ENCODE measurements at regions of chr16 and their contacts with region 1.

Region 1: DNA sequence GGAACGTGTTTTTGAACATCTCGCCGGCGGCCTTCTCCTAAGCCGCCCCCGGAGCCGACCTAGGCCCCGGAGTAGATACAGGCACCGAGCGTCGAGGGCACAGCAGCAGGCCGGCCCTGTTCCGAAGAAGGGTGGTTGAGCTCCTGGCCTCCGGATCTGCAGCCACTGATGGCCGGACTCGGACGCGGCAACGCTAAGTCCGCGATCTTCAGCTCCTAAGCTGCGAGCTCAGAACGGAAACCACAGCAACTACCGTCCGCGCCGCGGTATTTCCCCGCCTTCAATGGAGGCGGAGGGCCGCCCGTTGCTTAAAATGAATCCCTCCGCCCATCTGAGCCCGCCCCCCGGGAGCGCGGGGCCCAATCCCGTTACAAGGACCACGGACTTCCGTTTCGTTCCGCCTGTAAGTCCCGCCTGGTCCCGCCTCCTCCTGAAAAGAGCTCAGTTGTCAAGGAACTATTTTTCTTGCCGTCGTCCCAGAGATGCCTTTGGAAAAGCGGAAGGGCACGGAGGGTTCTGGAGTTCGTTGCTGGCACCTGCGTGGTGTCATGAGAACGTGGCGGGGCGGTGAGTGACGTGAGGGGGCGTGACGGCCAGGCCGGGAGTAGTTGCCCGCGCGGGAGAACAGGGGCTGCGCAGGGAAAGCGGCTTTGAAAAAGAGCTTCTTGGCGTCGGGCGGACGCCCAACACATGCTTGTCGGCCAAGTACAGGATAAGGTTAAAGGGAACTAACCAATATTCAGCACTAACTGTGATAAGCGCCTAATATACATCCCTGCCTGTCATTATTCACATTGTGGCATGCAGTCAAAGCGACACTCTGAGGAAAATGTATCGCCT is at the start of gene CFAP20:
- DNase-seq: peak; percentile 100
- H3K4me3 Mint-ChIP-seq: peak within 1 kb of the TSS; percentile 92
- H3K27ac Mint-ChIP-seq: peak within 1 kb of the TSS; percentile 94
- H3K4me1 Mint-ChIP-seq: peaks cover 25% of the 10 kb centered on the region
- H3K27me3 Mint-ChIP-seq: no peaks in the 10 kb centered on the region
- CTCF ChIP-seq: no peak
- total RNA-seq, gene CFAP20: 35.6 and 36.9 TPM in 2 replicates

Region 2: GRCh38 chr16:57899771-57900661 is 229.3 kb before region 1 on chr16:
- CTCF ChIA-PET with region 1: interaction called, 19 read pairs
- POLR2A ChIA-PET with region 1: no interaction called
- intact Hi-C with region 1: loop called (anchors 5 kb)
- DNase-seq: peak; percentile 73
- H3K4me3 Mint-ChIP-seq: no peak overlapping the region
- H3K27ac Mint-ChIP-seq: no peak overlapping the region
- H3K4me1 Mint-ChIP-seq: peaks cover 6% of the 10 kb centered on the region
- H3K27me3 Mint-ChIP-seq: no peaks in the 10 kb centered on the region
- CTCF ChIP-seq: peak; percentile 94

Region 3: DNA sequence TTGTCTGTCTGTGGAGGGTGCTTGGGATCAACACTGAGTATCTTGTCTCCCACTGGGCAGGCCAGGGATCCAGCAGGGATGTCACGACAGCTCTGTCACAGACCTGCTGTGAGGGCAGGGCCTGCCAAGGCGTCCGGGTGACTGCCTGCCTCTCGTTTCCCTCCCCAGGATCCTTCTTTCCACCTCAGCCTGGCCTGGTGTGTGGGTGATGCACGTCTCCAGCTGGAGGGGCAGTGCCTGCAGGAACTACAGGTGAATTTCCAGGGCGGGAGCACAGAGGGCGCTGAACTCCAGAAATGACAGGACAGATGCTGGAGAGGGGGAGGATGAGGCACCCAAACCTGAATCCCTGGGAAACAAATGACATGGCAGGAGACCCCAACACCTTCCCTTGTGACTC is 110.5 kb before region 1 on chr16:
- CTCF ChIA-PET with region 1: interaction called, 52 read pairs
- POLR2A ChIA-PET with region 1: interaction called, 68 read pairs
- intact Hi-C with region 1: no loop called
- DNase-seq: no peak
- H3K4me3 Mint-ChIP-seq: no peak overlapping the region
- H3K27ac Mint-ChIP-seq: no peak overlapping the region
- H3K4me1 Mint-ChIP-seq: peaks cover 15% of the 10 kb centered on the region
- H3K27me3 Mint-ChIP-seq: no peaks in the 10 kb centered on the region
- CTCF ChIP-seq: no peak

Region 4: GRCh38 chr16:58025351-58026138 is 103.8 kb before region 1 on chr16 and contains the start of gene MMP15:
- CTCF ChIA-PET with region 1: interaction called, 52 read pairs
- POLR2A ChIA-PET with region 1: interaction called, 68 read pairs
- intact Hi-C with region 1: no loop called
- DNase-seq: peak; percentile 71
- H3K4me3 Mint-ChIP-seq: peak within 1 kb of the TSS; percentile 56
- H3K27ac Mint-ChIP-seq: no peak within 1 kb of the TSS
- H3K4me1 Mint-ChIP-seq: peaks cover 13% of the 10 kb centered on the region
- H3K27me3 Mint-ChIP-seq: no peaks in the 10 kb centered on the region
- CTCF ChIP-seq: no peak
- total RNA-seq, gene MMP15: 1.3 and 1.7 TPM in 2 replicates

Region 5: GRCh38 chr16:58152246-58152868 is 23.0 kb after region 1 on chr16:
- CTCF ChIA-PET with region 1: no interaction called
- POLR2A ChIA-PET with region 1: interaction called, 12 read pairs
- intact Hi-C with region 1: no loop called
- DNase-seq: no peak
- H3K4me3 Mint-ChIP-seq: no peak overlapping the region
- H3K27ac Mint-ChIP-seq: no peak overlapping the region
- H3K4me1 Mint-ChIP-seq: no peaks in the 10 kb centered on the region
- H3K27me3 Mint-ChIP-seq: no peaks in the 10 kb centered on the region
- CTCF ChIP-seq: no peak

Region 6: GRCh38 chr16:58170223-58170622 is 40.9 kb after region 1 on chr16:
- CTCF ChIA-PET with region 1: interaction called, 7 read pairs
- POLR2A ChIA-PET with region 1: interaction called, 10 read pairs
- intact Hi-C with region 1: no loop called
- DNase-seq: no peak
- H3K4me3 Mint-ChIP-seq: no peak overlapping the region
- H3K27ac Mint-ChIP-seq: no peak overlapping the region
- H3K4me1 Mint-ChIP-seq: no peaks in the 10 kb centered on the region
- H3K27me3 Mint-ChIP-seq: no peaks in the 10 kb centered on the region
- CTCF ChIP-seq: no peak

Region 7: GRCh38 chr16:58652461-58653140 is 523.3 kb after region 1 on chr16:
- CTCF ChIA-PET with region 1: no interaction called
- POLR2A ChIA-PET with region 1: no interaction called
- intact Hi-C with region 1: loop called (anchors 10 kb)
- DNase-seq: peak; percentile 51
- H3K4me3 Mint-ChIP-seq: no peak overlapping the region
- H3K27ac Mint-ChIP-seq: no peak overlapping the region
- H3K4me1 Mint-ChIP-seq: no peaks in the 10 kb centered on the region
- H3K27me3 Mint-ChIP-seq: no peaks in the 10 kb centered on the region
- CTCF ChIP-seq: no peak